HAP-1 (cell line): ENCODE measurements at regions of chr6 and their contacts with region 1.

Region 1: DNA sequence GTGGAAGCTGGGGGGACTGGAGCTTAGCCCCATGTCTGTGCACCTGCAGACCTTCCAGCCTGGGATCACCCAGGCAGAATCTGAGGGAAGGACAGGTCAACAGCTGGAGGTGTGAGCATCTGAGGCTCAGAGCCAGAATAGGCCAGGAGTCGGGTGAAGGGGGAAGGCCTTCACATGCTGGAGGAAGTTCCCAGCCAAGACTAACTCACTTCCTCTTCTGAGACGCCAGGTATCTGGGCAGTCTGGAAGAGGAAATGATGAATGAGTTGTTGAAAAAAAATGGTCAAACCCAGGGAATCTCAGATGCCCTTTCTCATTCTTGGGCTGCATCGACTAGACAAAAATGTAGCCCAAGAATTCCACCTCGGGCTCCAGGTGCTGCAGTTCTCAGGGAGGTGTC is 73.6 kb upstream of the TIAM2 start:
- DNase-seq: no peak
- H3K4me3 ChIP-seq: no peak overlapping the region
- H3K4me1 ChIP-seq: no peaks in the 10 kb centered on the region
- H3K27me3 ChIP-seq: no peaks in the 10 kb centered on the region

Region 2: GRCh38 chr6:154715446-154715845 is 206.0 kb before region 1 on chr6:
- in situ Hi-C with region 1: no loop called
- DNase-seq: no peak
- H3K4me3 ChIP-seq: no peak overlapping the region
- H3K4me1 ChIP-seq: no peaks in the 10 kb centered on the region
- H3K27me3 ChIP-seq: no peaks in the 10 kb centered on the region

Region 3: DNA sequence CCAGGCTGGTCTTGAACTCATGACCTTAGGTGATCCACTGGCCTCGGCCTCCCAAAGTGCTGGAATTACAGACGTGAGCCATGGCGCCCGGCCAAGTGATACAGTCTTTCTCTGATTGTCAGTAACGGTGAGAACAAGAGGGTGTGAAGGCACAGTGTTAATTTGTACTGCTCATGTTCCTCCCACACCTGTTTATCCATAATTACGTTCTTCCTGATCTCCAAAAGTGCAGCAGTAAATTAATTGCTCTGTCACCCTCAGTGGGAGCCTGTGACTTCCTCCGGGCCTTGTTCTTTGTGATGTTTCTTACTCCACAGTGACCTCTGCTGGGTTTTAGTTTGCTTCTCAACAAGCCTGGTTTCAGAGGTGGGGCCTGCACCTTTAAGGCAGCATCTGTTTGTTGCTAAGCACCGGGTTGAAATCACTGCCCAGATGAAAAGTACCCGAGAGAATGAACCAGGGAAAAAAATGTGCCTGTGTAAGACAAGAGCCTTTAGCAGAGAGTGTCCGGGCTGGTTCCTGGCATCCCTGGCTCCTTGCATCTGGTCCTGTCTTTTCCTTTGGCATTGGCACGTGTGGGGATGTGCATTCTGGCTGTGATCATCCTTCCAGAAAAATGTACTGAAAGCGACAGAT is 253.2 kb after region 1 on chr6:
- in situ Hi-C with region 1: loop called (anchors 5 kb)
- DNase-seq: peak; percentile 84 to 90
- H3K4me3 ChIP-seq: no peak overlapping the region
- H3K4me1 ChIP-seq: peaks cover 33% of the 10 kb centered on the region
- H3K27me3 ChIP-seq: no peaks in the 10 kb centered on the region